CD14-positive monocyte (primary cell): ENCODE measurements at regions of chr17 and their contacts with region 1.

Region 1: DNA sequence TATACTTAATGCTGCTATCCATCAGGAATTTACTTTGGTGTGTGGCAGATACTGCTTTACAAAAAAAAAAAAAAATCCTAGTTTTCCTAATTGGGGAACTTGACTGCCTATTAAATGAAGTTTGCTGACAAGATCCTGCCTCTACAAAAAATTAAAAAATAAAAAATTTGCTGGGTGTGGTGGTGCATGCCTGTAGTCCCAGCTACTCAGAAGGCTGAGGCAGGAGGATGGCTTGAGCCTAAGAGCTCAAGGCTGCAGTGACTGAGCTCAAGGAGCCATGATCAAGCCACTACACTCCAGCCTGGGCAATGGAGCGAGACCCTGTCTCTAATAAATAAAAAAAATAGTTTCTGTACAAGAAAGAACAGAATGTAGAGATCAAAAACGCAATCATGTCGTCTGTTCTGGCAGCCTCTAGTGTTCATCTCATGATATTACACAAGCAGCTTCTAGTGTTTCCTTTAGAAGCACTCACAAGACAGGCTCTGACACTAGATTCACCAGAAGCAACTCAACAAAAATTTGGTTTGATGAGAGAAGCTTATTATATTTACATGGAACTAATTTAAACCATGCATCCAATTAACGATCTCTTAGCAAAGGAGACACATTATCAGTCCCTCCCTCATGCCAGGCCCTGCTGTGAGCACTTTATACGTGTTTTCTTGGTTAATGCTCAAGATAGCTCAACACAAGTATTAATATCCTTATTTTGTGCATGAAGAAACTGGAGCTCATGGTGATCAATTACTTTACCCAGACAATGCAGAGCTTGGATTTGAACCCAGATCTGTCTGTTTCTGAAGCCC is 6.8 kb upstream of the KRTAP17-1 start:
- DNase-seq: peak in 1 of 3 donors; percentile 33
- H3K4me3 ChIP-seq: no peak overlapping the region
- H3K4me3 Mint-ChIP-seq: no peak overlapping the region
- H3K27ac ChIP-seq: no peak overlapping the region
- H3K27ac Mint-ChIP-seq: no peak overlapping the region
- H3K4me1 ChIP-seq: peaks cover 0 to 7% of the 10 kb centered on the region in 2 donors
- H3K4me1 Mint-ChIP-seq: peaks cover 9% of the 10 kb centered on the region
- H3K27me3 ChIP-seq: no peaks in the 10 kb centered on the region
- H3K27me3 Mint-ChIP-seq: peaks cover 0 to 3% (median 3%) of the 10 kb centered on the region in 3 donors
- CTCF ChIP-seq: peak; percentile 89

Region 2: DNA sequence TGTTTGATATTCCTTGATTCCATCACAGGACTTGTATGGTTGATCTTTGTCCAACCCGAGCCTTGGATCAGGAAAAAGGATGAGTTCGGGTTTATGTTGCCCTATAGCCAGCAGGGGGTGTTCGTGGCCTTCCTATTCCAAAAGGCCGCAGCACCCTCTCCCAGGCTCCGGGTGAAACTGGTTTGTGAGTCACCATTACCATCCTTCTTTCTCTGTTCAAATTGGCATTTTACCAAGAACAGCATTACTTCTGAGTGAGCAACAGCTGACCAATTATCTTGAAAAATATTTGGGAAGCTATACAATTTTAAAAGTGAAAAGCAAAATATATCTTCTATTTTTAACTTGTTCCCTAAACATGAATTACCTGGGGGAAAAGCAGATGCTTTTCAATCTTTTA is 412.9 kb before region 1 on chr17:
- intact Hi-C with region 1: loop called (anchors 5 to 10 kb)
- DNase-seq: peak; percentile 87 to 94 (median 93)
- H3K4me3 ChIP-seq: no peak overlapping the region
- H3K4me3 Mint-ChIP-seq: no peak overlapping the region
- H3K27ac ChIP-seq: peak overlapping the region in 1 of 2 donors; percentile 28
- H3K27ac Mint-ChIP-seq: peak overlapping the region in 2 of 7 donors; percentile 26 to 81
- H3K4me1 ChIP-seq: peaks cover 42 to 44% of the 10 kb centered on the region in 2 donors
- H3K4me1 Mint-ChIP-seq: peaks cover 35% of the 10 kb centered on the region
- H3K27me3 ChIP-seq: peaks cover 4 to 9% of the 10 kb centered on the region in 2 donors
- H3K27me3 Mint-ChIP-seq: peaks cover 14 to 23% (median 17%) of the 10 kb centered on the region in 3 donors
- CTCF ChIP-seq: peak; percentile 93

Region 3: DNA sequence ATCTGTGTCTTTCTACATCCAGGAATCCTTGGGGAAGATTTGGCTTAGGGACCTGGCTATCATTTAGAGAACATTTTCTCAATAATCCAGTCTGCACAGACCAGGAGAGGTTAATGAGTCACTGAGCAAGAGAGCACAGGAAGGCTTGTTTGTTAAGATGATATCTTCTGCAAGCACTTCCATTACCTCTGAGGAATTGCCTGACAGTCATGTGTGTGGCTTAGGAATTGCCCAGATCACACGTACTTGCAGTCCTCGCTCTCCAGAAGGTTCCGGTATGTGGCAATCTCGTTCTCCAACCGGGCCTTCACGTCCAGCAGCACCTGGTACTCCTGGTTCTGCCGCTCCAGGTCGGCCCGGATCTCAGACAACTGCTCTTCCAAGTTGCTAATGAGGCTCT is 98.8 kb after region 1 on chr17:
- intact Hi-C with region 1: no loop called
- DNase-seq: no peak
- H3K4me3 ChIP-seq: no peak overlapping the region
- H3K4me3 Mint-ChIP-seq: no peak overlapping the region
- H3K27ac ChIP-seq: no peak overlapping the region
- H3K27ac Mint-ChIP-seq: no peak overlapping the region
- H3K4me1 ChIP-seq: peaks cover 4 to 5% of the 10 kb centered on the region in 2 donors
- H3K4me1 Mint-ChIP-seq: peaks cover 7% of the 10 kb centered on the region
- H3K27me3 ChIP-seq: no peaks in the 10 kb centered on the region
- H3K27me3 Mint-ChIP-seq: peaks cover 4 to 9% (median 7%) of the 10 kb centered on the region in 3 donors
- CTCF ChIP-seq: no peak